ENCODE measurements at regions of chr16 and their contacts with region 1.

Region 1: GRCh38 chr16:2500918-2501750 is 12.6 kb upstream of the ATP6V0C start:
- DNase-seq: peak; percentile 96
- H3K4me3 ChIP-seq: peak overlapping the region; percentile 36 to 52 (median 40)
- H3K27ac ChIP-seq: peak overlapping the region in 3 of 4 donors; percentile 52 to 59 (median 53)
- H3K4me1 ChIP-seq: peaks cover 42 to 48% (median 45%) of the 10 kb centered on the region in 4 donors
- H3K27me3 ChIP-seq: no peaks in the 10 kb centered on the region
- CTCF ChIP-seq: peak in 2 of 3 experiments; percentile 96 to 97
- EP300 ChIP-seq: no peak
- POLR2A ChIP-seq: peak; percentile 22

Region 2: DNA sequence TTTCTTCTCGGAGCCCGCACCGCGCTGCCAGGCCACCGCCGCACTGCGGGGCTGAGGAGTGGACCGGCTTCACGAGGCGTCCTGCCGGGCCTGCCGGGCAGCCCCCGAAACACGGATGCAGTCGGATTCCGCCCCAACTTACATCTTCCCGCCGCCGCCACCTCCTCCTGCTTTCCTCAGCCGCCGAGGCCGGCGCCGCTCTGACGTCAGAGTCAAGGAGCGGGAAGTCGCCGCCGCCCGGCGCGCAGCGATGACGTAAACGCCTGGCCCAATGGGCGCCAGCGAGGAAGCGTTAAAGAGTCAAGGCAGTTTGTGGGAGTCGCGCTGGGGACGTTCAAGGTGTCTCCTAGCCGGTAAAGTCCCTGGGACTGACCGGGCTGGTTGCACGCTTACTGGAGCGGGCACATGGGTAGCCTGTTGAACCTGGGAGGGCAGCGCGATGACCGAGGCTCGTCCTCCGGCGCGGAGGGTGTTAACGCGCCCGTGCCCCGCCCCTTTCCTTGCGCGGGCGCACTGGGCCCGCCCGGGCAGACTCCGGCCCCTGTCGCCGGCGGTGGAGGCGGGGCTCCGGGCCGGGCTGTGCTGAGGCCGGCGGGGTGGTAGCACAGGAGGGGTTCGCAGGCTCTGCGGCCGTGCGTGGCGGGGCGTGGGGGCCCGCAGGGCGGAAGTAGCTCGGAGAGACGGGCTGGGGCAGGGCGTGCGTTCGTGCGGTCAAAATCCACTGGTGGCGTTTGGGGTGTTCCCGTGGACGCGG is 233.0 kb before region 1 on chr16 and contains the start of gene RNPS1:
- intact Hi-C with region 1: loop called (anchors 10 kb)
- DNase-seq: peak; percentile 99
- H3K4me3 ChIP-seq: peak within 1 kb of the TSS; percentile 82 to 91 (median 84)
- H3K27ac ChIP-seq: peak within 1 kb of the TSS; percentile 87 to 97 (median 92)
- H3K4me1 ChIP-seq: peaks cover 30 to 75% (median 49%) of the 10 kb centered on the region in 4 donors
- H3K27me3 ChIP-seq: no peaks in the 10 kb centered on the region
- CTCF ChIP-seq: peak in 1 of 3 experiments; percentile 25
- EP300 ChIP-seq: no peak
- POLR2A ChIP-seq: peak; percentile 99
- total RNA-seq, gene RNPS1: 114 to 179 (median 151) TPM

Region 3: GRCh38 chr16:2340564-2341455 is 160.3 kb before region 1 on chr16 and contains the start of gene ABCA3:
- intact Hi-C with region 1: loop called (anchors 2 kb)
- DNase-seq: peak; percentile 97
- H3K4me3 ChIP-seq: peak within 1 kb of the TSS; percentile 83 to 93 (median 85)
- H3K27ac ChIP-seq: peak within 1 kb of the TSS; percentile 61 to 79 (median 66)
- H3K4me1 ChIP-seq: peaks cover 19 to 43% (median 26%) of the 10 kb centered on the region in 4 donors
- H3K27me3 ChIP-seq: no peaks in the 10 kb centered on the region
- CTCF ChIP-seq: peak; percentile 98 to 100 (median 99)
- EP300 ChIP-seq: no peak
- POLR2A ChIP-seq: no peak
- total RNA-seq, gene ABCA3: 10.4 to 30.7 (median 18.1) TPM

Region 4: GRCh38 chr16:2429034-2429770 is 71.9 kb before region 1 on chr16 and contains the start of gene CCNF:
- intact Hi-C with region 1: loop called (anchors 5 kb)
- DNase-seq: peak; percentile 99
- H3K4me3 ChIP-seq: peak within 1 kb of the TSS; percentile 64 to 96 (median 74)
- H3K27ac ChIP-seq: peak within 1 kb of the TSS; percentile 72 to 88 (median 78)
- H3K4me1 ChIP-seq: peaks cover 15 to 21% (median 19%) of the 10 kb centered on the region in 4 donors
- H3K27me3 ChIP-seq: no peaks in the 10 kb centered on the region
- CTCF ChIP-seq: peak in 1 of 3 experiments; percentile 50
- EP300 ChIP-seq: no peak
- POLR2A ChIP-seq: peak; percentile 47
- total RNA-seq, gene CCNF: 0.83 to 2.5 (median 1.5) TPM

Region 5: DNA sequence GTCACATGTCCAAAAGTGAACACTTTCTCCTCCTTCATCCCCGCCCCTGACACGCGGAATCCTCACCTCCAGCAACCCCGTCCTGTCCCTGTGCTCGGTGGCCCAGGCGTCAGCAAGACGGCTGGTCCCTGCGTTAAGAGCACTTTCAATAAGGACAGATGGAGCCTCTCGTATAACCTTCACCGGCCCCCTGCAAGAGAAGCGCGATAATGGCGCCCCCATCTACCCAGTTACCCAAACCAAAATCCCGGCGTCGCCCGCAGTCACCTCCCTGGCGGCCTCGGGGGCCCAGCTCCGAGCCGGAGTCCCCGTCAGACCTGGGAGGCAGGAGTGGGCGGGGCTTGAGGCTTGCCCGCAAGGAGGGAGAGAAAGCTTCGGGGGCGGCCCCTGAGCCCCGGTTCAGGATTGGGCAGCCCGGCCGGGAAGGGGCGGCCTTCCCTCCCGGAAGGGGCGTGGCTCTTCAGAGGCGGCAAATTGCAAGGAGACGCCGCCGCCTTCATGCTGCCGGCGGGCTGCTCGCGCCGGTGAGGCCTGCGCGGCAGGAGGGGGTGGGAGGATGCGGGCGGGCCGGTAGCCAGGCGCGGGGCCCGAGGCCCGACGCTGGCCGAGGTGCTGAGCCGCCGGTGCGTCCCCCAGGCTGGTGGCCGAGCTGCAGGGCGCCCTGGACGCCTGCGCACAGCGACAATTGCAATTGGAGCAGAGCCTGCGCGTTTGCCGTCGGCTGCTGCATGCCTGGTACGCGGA is 41.3 kb before region 1 on chr16 and contains the start of gene TEDC2:
- intact Hi-C with region 1: loop called (anchors 5 kb)
- DNase-seq: peak; percentile 98
- H3K4me3 ChIP-seq: peak within 1 kb of the TSS; percentile 53 to 64 (median 59)
- H3K27ac ChIP-seq: peak within 1 kb of the TSS; percentile 45 to 57 (median 55)
- H3K4me1 ChIP-seq: peaks cover 15 to 20% (median 17%) of the 10 kb centered on the region in 4 donors
- H3K27me3 ChIP-seq: no peaks in the 10 kb centered on the region
- CTCF ChIP-seq: no peak
- EP300 ChIP-seq: no peak
- POLR2A ChIP-seq: no peak
- total RNA-seq, gene TEDC2: 1.5 TPM in 1 of 4 donors, not detected in the others

Region 6: GRCh38 chr16:2513405-2514322 is 12.5 kb after region 1 on chr16 and contains the start of gene ATP6V0C:
- intact Hi-C with region 1: no loop called
- DNase-seq: peak; percentile 98
- H3K4me3 ChIP-seq: peak within 1 kb of the TSS; percentile 83 to 100 (median 97)
- H3K27ac ChIP-seq: peak within 1 kb of the TSS; percentile 96 to 100 (median 99)
- H3K4me1 ChIP-seq: peaks cover 49 to 68% (median 67%) of the 10 kb centered on the region in 4 donors
- H3K27me3 ChIP-seq: peaks cover 0 to 5% (median 0%) of the 10 kb centered on the region in 4 donors
- CTCF ChIP-seq: peak in 1 of 3 experiments; percentile 19
- EP300 ChIP-seq: no peak
- POLR2A ChIP-seq: peak; percentile 80
- total RNA-seq, gene ATP6V0C: 42.8 to 85.0 (median 69.0) TPM

Region 7: GRCh38 chr16:2586241-2586640 is 85.1 kb after region 1 on chr16:
- intact Hi-C with region 1: no loop called
- DNase-seq: no peak
- H3K4me3 ChIP-seq: no peak overlapping the region
- H3K27ac ChIP-seq: no peak overlapping the region
- H3K4me1 ChIP-seq: peaks cover 6 to 11% (median 10%) of the 10 kb centered on the region in 4 donors
- H3K27me3 ChIP-seq: no peaks in the 10 kb centered on the region
- CTCF ChIP-seq: no peak
- EP300 ChIP-seq: no peak
- POLR2A ChIP-seq: no peak

Measured in esophagus muscularis mucosa (tissue), 4 donors.